Tibial artery (tissue), 4 donors: ENCODE measurements at regions of chrX and their contacts with region 1.

Region 1: GRCh38 chrX:85109235-85109634 is 105.6 kb downstream of the APOOL start:
- DNase-seq: no peak
- H3K4me3 ChIP-seq: no peak overlapping the region
- H3K27ac ChIP-seq: no peak overlapping the region
- H3K4me1 ChIP-seq: no peaks in the 10 kb centered on the region
- H3K27me3 ChIP-seq: no peaks in the 10 kb centered on the region
- CTCF ChIP-seq: no peak

Region 2: DNA sequence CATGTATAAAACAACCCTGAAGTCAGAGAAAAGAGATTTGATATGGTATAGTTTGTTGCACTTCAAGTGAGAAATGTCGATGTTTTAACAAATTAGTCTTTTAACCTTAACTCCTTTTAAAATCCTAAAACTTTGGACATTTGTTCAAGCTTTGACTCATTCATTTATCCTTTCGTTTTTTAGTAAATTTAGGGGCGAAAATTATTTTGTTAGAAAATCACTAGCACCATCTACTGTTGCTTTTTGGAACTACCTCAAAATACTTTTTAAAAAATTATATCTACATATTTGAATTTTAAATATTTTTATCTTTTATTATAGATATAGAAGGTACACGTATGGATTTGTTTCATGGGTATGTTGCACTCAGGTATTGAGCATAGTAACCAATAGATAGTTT is 435.4 kb after region 1 on chrX:
- intact Hi-C with region 1: loop called (anchors 10 kb)
- DNase-seq: no peak
- H3K4me3 ChIP-seq: no peak overlapping the region
- H3K27ac ChIP-seq: no peak overlapping the region
- H3K4me1 ChIP-seq: no peaks in the 10 kb centered on the region
- H3K27me3 ChIP-seq: no peaks in the 10 kb centered on the region
- CTCF ChIP-seq: peak; percentile 9 to 28